ENCODE measurements at regions of chr14 and their contacts with region 1.

Region 1: DNA sequence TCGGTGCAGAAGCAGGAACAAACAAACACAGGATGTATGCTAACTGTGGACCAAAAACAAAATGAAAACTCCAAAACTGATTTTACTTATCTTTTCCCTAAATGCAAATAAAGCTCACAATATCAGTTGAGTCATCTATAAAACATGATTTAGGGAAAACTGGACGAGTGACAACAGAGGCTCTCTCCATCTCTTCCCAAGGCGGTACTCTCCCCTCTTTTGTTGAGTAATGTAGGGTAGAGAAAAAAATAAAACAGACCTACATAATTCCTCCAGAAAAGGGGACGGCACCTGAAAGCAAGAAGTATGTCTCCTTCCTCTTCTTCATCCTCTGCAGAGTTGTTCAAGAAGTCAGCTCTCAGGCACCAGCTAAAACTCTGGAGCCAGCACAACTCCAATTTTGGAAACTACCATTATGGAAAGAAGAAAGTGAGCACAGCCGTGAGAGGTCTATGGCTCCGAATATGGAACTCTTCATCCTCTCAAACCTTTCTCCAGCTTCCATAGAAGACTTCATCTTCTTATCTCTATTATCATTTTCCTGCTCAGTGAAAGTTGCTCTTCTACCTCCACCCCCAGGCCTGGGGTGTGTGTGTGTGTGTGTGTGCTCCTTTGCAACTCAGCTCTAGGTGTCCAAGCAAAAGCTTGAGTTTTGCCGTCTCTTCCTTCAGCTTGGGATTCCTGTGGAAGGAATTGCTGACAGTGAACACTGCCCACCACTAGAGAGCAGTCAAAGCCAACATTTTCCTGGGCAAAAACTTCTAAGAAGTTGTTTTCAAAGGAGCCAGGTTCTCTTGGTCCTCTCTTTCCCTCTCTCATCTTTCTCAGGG is 155.4 kb downstream of the DIO2 start:
- DNase-seq: no peak
- H3K4me3 ChIP-seq: no peak overlapping the region
- CTCF ChIP-seq: peak; percentile 79

Region 2: GRCh38 chr14:80078501-80078900 is 22.6 kb after region 1 on chr14:
- CTCF ChIA-PET with region 1: interaction called, 11 read pairs
- POLR2A ChIA-PET with region 1: no interaction called
- DNase-seq: no peak
- H3K4me3 ChIP-seq: no peak overlapping the region
- CTCF ChIP-seq: no peak

Region 3: GRCh38 chr14:80356413-80356812 is 300.5 kb after region 1 on chr14:
- CTCF ChIA-PET with region 1: interaction called, 11 read pairs
- POLR2A ChIA-PET with region 1: no interaction called
- DNase-seq: no peak
- H3K4me3 ChIP-seq: no peak overlapping the region
- CTCF ChIP-seq: peak; percentile 57

Region 4: GRCh38 chr14:80784820-80785219 is 728.9 kb after region 1 on chr14:
- CTCF ChIA-PET with region 1: interaction called, 12 read pairs
- POLR2A ChIA-PET with region 1: no interaction called
- DNase-seq: no peak
- H3K4me3 ChIP-seq: no peak overlapping the region
- CTCF ChIP-seq: peak; percentile 35

Region 5: DNA sequence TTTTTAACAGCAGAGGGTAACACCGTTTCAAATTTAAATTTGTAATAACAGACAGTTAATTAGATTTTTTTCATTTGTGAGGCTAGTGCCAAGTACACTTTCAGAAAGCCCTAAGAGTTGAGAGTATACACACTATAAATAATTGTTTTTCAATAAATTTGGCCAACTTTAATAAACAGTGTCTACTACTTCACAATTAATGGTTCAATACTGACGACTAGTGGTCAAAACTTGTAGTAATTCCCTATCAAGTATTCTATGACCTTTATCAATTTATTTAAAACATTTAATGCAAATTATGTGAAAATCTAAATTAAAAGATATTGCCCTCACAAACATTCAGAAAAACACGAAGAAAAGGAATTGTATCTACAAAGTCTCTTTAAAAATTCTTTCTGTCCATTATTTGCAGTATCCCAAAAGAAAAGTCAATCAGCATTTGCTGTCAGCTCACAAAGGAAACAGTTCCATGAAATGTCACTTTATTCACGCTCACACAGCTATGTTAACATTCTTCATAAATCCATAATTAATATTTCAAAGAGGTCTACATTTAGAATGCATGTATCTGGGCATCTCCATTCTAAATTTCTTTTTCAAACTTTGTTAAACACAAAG is 794.4 kb after region 1 on chr14:
- CTCF ChIA-PET with region 1: interaction called, 60 read pairs
- POLR2A ChIA-PET with region 1: no interaction called
- DNase-seq: no peak
- H3K4me3 ChIP-seq: no peak overlapping the region
- CTCF ChIP-seq: peak; percentile 23

Region 6: GRCh38 chr14:80862983-80863382 is 807.1 kb after region 1 on chr14:
- CTCF ChIA-PET with region 1: interaction called, 37 read pairs
- POLR2A ChIA-PET with region 1: no interaction called
- DNase-seq: no peak
- H3K4me3 ChIP-seq: no peak overlapping the region
- CTCF ChIP-seq: no peak

Measured in AG04449 (cell line).